Cardiac septum (tissue), 1 donor: ENCODE measurements at regions of chr5 and their contacts with region 1.

Region 1: DNA sequence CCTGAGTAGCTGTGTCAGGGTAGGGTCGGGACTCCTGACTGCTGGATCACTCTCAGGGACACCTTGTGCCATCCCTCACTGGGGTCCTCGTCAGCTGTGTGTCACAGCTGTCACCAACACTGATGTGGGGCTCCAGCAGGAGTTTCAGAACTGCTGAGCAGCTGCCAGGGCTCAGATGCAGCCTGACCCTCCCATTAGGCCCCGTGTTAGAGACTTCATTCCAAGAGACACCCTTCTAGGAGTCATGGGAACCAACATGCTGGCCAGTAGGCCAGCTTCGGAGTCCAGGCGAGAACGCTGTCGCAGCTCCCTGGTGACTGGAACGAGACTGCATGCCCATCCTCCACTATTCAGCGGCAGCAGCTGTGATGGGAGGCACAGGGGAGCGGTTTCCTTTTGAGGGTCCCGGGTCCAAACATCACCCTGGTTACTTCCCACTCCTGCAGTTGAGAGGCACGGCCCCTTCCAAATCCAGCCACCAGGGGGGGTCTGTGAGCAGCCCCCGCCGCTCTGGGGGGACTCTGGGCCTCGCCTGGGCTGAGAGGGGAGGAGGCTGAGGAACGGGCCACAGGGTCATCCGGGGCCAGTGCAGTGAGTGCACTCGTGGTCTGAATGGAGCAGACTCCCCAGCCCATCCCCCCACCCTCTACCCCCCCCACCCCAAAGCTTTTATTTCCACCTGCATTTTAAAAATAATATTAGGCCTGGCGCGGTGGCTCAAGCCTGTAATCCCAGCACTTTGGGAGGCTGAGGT is 12.6 kb upstream of the TCF7 start:
- DNase-seq: peak; percentile 84

Region 2: GRCh38 chr5:134140530-134141201 is 38.8 kb after region 1 on chr5:
- intact Hi-C with region 1: loop called (anchors 2 kb)
- DNase-seq: peak; percentile 79